Activated naive CD4-positive, alpha-beta T cell treated with anti-CD3 and anti-CD28 coated beads for 36 hours (primary cell): ENCODE measurements at regions of chr16 and their contacts with region 1.

Region 1: GRCh38 chr16:19086322-19087199 is 19.1 kb downstream of the COQ7 start:
- DNase-seq: peak; percentile 78
- H3K4me3 Mint-ChIP-seq: peak overlapping the region; percentile 56
- H3K27ac Mint-ChIP-seq: no peak overlapping the region
- H3K4me1 Mint-ChIP-seq: no peaks in the 10 kb centered on the region
- H3K27me3 Mint-ChIP-seq: peaks cover 8% of the 10 kb centered on the region

Region 2: GRCh38 chr16:19073863-19074262 is 12.7 kb before region 1 on chr16:
- CTCF ChIA-PET with region 1: interaction called, 14 read pairs
- intact Hi-C with region 1: no loop called
- DNase-seq: no peak
- H3K4me3 Mint-ChIP-seq: no peak overlapping the region
- H3K27ac Mint-ChIP-seq: no peak overlapping the region
- H3K4me1 Mint-ChIP-seq: peaks cover under 1% of the 10 kb centered on the region
- H3K27me3 Mint-ChIP-seq: no peaks in the 10 kb centered on the region

Region 3: DNA sequence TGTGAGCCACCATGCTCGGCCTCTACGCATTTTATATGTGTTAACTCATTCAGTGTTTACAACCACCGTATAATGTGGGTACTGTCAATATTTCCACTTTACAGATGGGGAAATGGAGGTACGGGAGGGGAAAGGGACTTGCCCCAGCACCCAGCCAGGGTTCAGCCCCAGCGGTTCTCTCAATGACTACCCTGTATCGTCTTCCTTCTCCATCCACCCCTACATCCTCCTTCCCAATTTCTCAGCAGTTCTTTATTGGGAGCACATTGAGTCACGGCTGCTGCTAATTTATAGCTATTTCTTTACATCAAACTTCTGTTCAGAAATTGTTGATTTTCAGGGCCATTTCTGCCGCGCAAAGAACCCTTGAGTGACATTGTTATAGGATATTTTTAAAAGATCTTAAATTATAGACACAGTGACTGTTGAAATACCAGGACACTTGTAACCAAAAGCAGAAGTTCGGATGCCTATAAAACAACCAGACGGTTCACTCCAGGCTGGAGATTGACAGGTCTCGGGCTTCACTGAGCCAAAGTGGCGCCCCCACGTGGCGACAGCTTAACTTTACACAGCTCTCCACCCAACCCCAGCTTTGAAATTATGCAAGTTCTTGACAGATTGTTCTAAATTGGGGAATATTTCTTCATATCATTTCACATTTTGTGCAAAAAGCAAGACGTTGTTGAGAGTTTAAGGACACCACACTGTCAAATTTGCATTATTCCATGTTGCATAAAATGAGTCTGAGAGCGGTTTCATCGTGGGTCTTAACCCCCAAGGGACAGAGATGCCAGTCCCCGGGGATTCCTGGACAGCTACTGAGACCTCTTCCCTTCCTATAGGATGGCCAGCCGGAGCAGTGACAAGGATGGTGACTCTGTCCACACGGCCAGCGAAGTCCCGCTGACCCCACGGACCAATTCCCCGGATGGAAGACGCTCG is 93.3 kb after region 1 on chr16:
- CTCF ChIA-PET with region 1: interaction called, 6 read pairs
- intact Hi-C with region 1: loop called (anchors 1 kb)
- DNase-seq: peak; percentile 48
- H3K4me3 Mint-ChIP-seq: no peak overlapping the region
- H3K27ac Mint-ChIP-seq: no peak overlapping the region
- H3K4me1 Mint-ChIP-seq: no peaks in the 10 kb centered on the region
- H3K27me3 Mint-ChIP-seq: peaks cover 10% of the 10 kb centered on the region

Region 4: GRCh38 chr16:19375561-19376158 is 289.1 kb after region 1 on chr16:
- CTCF ChIA-PET with region 1: interaction called, 3 read pairs
- intact Hi-C with region 1: loop called (anchors 1 kb)
- DNase-seq: peak; percentile 54
- H3K4me3 Mint-ChIP-seq: no peak overlapping the region
- H3K27ac Mint-ChIP-seq: no peak overlapping the region
- H3K4me1 Mint-ChIP-seq: no peaks in the 10 kb centered on the region
- H3K27me3 Mint-ChIP-seq: no peaks in the 10 kb centered on the region

Region 5: DNA sequence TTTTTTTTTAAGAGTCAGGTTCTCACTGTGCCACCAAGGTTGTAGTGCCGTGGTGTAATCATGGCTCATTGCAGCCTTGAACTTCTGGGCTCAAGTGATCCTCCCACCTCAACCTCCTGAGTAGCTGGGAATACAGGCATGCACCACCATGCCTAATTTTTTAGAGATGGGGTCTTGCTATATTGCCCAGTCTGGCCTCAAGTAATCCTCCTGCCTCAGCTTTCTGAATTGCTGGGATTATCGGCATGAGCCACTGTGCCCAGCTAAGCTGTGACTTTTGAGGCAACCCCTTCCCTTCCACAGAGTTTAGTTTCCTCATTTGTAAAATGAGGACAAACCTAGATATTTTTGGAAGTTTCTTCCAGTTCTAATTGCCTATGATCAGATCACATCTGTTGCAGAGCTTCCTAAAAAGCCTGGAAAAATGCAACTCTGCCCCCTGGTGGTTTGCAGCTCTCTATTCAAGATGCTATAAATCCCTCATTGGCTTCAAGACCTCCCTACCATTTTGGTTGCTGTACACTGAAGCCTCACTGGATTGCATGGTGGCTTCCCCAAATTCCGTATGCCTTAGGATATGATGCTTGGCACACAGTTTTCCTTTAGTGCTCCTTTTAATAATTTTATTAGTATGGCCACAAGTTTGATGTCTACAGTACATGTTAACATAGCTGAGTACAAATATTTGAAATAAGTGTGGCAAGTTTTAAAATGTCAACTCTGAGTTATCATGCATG is 416.0 kb after region 1 on chr16:
- CTCF ChIA-PET with region 1: interaction called, 13 read pairs
- intact Hi-C with region 1: loop called (anchors 1 kb)
- DNase-seq: peak; percentile 83
- H3K4me3 Mint-ChIP-seq: no peak overlapping the region
- H3K27ac Mint-ChIP-seq: no peak overlapping the region
- H3K4me1 Mint-ChIP-seq: no peaks in the 10 kb centered on the region
- H3K27me3 Mint-ChIP-seq: no peaks in the 10 kb centered on the region